ENCODE measurements at regions of chr1 and their contacts with region 1.

Region 1: GRCh38 chr1:2525920-2526823 is at the start of gene PANK4:
- DNase-seq: peak; percentile 96
- H3K4me3 ChIP-seq: peak within 1 kb of the TSS; percentile 58 to 96 (median 90)
- H3K27ac ChIP-seq: peak within 1 kb of the TSS; percentile 70 to 83 (median 80)
- H3K4me1 ChIP-seq: peaks cover 0 to 67% (median 65%) of the 10 kb centered on the region in 4 donors
- H3K27me3 ChIP-seq: peaks cover 21 to 35% (median 30%) of the 10 kb centered on the region in 3 donors
- CTCF ChIP-seq: no peak
- EP300 ChIP-seq: no peak
- POLR2A ChIP-seq: peak; percentile 27 to 56
- total RNA-seq, gene PANK4: 23.6 to 37.7 (median 27.9) TPM

Region 2: DNA sequence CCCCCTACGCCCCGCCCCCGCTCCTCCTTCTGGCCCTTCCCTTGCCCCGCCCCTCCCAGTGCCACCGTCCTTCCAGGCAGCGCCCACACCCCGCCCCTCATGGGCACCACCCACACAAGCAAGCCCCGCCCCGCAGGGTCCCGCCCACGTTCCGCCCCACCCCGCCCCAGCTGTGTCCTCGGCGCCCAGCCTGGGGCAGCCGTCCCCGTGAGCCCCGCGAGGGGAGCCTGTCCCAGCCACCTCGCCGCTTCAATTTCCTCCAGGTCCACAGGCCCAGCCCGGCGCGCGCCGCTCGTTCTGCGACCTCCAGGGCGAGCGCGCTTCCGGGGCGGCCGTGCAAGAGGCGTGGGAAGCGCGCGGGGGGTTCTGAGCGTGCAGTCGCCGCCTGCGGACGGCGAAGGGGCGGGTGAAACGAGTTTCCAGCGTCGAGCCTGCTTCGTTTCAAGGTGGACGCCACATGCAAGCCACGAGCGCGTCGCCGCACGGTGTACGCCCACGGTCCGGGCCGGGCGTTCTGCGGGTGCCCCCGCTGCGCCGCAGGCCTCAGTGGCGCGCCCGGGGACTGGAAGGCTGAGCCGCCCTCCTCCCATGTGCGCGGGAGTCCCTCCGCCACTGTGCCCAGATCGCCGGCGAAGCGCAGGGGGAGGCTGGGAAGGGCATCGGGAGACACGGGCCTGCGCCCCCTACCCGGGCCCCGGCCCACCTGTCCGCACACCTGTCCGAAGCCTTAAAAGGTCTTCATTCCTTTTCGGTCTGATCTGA is 320.8 kb before region 1 on chr1:
- intact Hi-C with region 1: loop called (anchors 5 kb)
- DNase-seq: peak; percentile 99
- H3K4me3 ChIP-seq: peak overlapping the region; percentile 23 to 57 (median 47)
- H3K27ac ChIP-seq: peak overlapping the region; percentile 88 to 94 (median 92)
- H3K4me1 ChIP-seq: peaks cover 0 to 64% (median 49%) of the 10 kb centered on the region in 4 donors
- H3K27me3 ChIP-seq: no peaks in the 10 kb centered on the region
- CTCF ChIP-seq: no peak
- EP300 ChIP-seq: peak in 1 of 4 donors; percentile 23
- POLR2A ChIP-seq: peak in 1 of 2 donors; percentile 39

Region 3: GRCh38 chr1:2545759-2546514 is 19.8 kb after region 1 on chr1:
- intact Hi-C with region 1: loop called (anchors 1 kb)
- DNase-seq: peak; percentile 96
- H3K4me3 ChIP-seq: peak overlapping the region; percentile 36 to 52 (median 48)
- H3K27ac ChIP-seq: peak overlapping the region; percentile 79 to 94 (median 82)
- H3K4me1 ChIP-seq: peaks cover 0 to 61% (median 46%) of the 10 kb centered on the region in 4 donors
- H3K27me3 ChIP-seq: peaks cover 19 to 68% (median 53%) of the 10 kb centered on the region in 3 donors
- CTCF ChIP-seq: no peak
- EP300 ChIP-seq: no peak
- POLR2A ChIP-seq: peak in 1 of 2 donors; percentile 39

Region 4: GRCh38 chr1:2566101-2567045 is 40.2 kb after region 1 on chr1:
- intact Hi-C with region 1: no loop called
- DNase-seq: no peak
- H3K4me3 ChIP-seq: no peak overlapping the region
- H3K27ac ChIP-seq: no peak overlapping the region
- H3K4me1 ChIP-seq: no peaks in the 10 kb centered on the region
- H3K27me3 ChIP-seq: peaks cover 0 to 47% (median 24%) of the 10 kb centered on the region in 3 donors
- CTCF ChIP-seq: no peak
- EP300 ChIP-seq: no peak
- POLR2A ChIP-seq: no peak

Region 5: GRCh38 chr1:2628191-2628932 is 102.2 kb after region 1 on chr1:
- intact Hi-C with region 1: no loop called
- DNase-seq: no peak
- H3K4me3 ChIP-seq: no peak overlapping the region
- H3K27ac ChIP-seq: no peak overlapping the region
- H3K4me1 ChIP-seq: peaks cover 0 to 11% (median 6%) of the 10 kb centered on the region in 4 donors
- H3K27me3 ChIP-seq: peaks cover 42 to 84% (median 53%) of the 10 kb centered on the region in 3 donors
- CTCF ChIP-seq: no peak
- EP300 ChIP-seq: no peak
- POLR2A ChIP-seq: no peak

Region 6: DNA sequence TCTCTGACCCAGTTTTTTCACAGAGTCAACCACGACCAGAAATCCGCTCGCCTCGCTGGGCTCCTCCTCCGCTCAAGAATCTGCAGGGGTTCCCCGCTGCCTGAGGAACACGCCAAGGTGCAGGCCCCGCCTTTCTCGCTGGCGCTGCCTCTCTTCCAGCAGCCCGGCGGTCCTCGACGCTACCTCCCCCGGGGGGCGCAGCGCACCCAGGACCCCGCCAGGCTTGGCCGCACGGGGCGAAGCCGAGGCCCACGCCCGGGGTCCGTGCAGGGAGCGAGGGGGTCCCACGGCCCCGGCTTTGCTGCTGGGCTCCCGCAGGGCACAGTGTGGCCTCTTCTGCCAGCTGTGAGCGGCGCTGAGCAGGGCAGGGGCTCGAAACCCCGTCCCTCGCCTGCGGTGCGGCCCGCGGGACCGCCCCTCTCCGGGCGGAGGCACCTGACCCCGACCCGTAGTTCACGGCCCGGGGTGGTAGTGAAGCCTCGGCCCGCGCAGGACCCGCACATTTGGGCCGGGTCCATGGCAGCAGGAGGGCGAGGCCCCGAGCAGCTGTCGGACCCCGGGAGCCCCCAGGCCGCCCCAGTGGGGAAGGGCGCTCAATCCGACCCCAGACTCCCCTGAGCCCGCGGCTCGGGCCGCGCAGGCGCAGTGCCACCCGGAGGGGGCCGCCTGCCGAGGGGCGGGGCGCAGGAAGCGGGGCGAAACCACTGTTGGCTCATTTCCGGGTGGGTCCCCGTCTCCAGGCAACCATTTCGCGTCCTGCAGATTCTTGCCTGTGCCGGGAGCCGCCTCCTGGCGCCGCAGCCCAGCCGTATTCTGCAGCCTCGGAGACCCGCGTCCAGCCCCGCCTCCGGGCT is 116.6 kb after region 1 on chr1:
- intact Hi-C with region 1: loop called (anchors 10 kb)
- DNase-seq: peak; percentile 96
- H3K4me3 ChIP-seq: peak overlapping the region; percentile 67 to 95 (median 88)
- H3K27ac ChIP-seq: peak overlapping the region; percentile 81 to 84 (median 82)
- H3K4me1 ChIP-seq: peaks cover 0 to 26% (median 21%) of the 10 kb centered on the region in 4 donors
- H3K27me3 ChIP-seq: peaks cover 0 to 2% (median 0%) of the 10 kb centered on the region in 3 donors
- CTCF ChIP-seq: no peak
- EP300 ChIP-seq: no peak
- POLR2A ChIP-seq: peak; percentile 63 to 67